Activated T-helper 2 cell treated with anti-CD3 and anti-CD28 coated beads, Interferon-gamma antibody, Interleukin-2, Interleukin-4, amounts not matched to agents 10 μg/mL and 5 μg/mL and 100 μg/mL, durations not matched to agents 14 hours and 24 hours and 36 hours (primary cell): ENCODE measurements at regions of chr3 and their contacts with region 1.

Region 1: GRCh38 chr3:46953234-46954010 is 23.1 kb downstream of the CCDC12 start:
- DNase-seq: no peak
- H3K4me3 Mint-ChIP-seq: peak overlapping the region; percentile 63
- H3K27ac Mint-ChIP-seq: peak overlapping the region; percentile 95
- H3K4me1 Mint-ChIP-seq: peaks cover 78% of the 10 kb centered on the region
- H3K27me3 Mint-ChIP-seq: no peaks in the 10 kb centered on the region

Region 2: GRCh38 chr3:46812237-46812791 is 141.1 kb before region 1 on chr3:
- intact Hi-C with region 1: no loop called
- DNase-seq: peak; percentile 51
- H3K4me3 Mint-ChIP-seq: peak overlapping the region; percentile 56
- H3K27ac Mint-ChIP-seq: no peak overlapping the region
- H3K4me1 Mint-ChIP-seq: peaks cover 16% of the 10 kb centered on the region
- H3K27me3 Mint-ChIP-seq: peaks cover 27% of the 10 kb centered on the region

Region 3: GRCh38 chr3:46915297-46915822 is 38.1 kb before region 1 on chr3:
- intact Hi-C with region 1: loop called (anchors 5 kb)
- DNase-seq: no peak
- H3K4me3 Mint-ChIP-seq: no peak overlapping the region
- H3K27ac Mint-ChIP-seq: no peak overlapping the region
- H3K4me1 Mint-ChIP-seq: peaks cover 27% of the 10 kb centered on the region
- H3K27me3 Mint-ChIP-seq: no peaks in the 10 kb centered on the region

Region 4: DNA sequence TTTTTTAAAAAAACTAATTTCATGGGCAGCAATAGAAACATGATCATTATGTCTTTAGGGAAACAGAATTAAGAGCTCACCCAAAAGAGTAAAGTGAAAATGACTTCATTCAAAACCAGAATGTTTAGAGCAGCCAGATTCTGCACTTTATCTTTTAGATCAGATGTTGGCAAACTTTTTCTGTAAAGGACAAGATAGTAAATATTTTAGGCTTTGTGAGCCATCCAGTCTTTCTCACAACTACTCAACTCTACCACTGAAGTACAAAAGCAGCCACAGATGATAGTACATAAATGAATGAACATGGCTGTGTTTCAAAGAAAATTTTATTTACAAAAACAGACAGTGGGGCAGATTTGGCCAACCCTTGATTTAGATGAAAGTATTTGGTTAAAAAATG is 126.0 kb after region 1 on chr3:
- intact Hi-C with region 1: no loop called
- DNase-seq: no peak
- H3K4me3 Mint-ChIP-seq: no peak overlapping the region
- H3K27ac Mint-ChIP-seq: peak overlapping the region; percentile 9
- H3K4me1 Mint-ChIP-seq: peaks cover 28% of the 10 kb centered on the region
- H3K27me3 Mint-ChIP-seq: no peaks in the 10 kb centered on the region